Spleen (tissue), 13 donors: ENCODE measurements at regions of chr11 and their contacts with region 1.

Region 1: GRCh38 chr11:65204646-65205601 is 23.2 kb downstream of the CAPN1 start:
- DNase-seq: peak; percentile 82
- H3K4me3 ChIP-seq: no peak overlapping the region
- H3K27ac ChIP-seq: no peak overlapping the region
- H3K4me1 ChIP-seq: peaks cover 0 to 29% (median 14%) of the 10 kb centered on the region in 6 donors
- H3K27me3 ChIP-seq: no peaks in the 10 kb centered on the region
- CTCF ChIP-seq: peak; percentile 71 to 96 (median 89)
- POLR2A ChIP-seq: no peak

Region 2: DNA sequence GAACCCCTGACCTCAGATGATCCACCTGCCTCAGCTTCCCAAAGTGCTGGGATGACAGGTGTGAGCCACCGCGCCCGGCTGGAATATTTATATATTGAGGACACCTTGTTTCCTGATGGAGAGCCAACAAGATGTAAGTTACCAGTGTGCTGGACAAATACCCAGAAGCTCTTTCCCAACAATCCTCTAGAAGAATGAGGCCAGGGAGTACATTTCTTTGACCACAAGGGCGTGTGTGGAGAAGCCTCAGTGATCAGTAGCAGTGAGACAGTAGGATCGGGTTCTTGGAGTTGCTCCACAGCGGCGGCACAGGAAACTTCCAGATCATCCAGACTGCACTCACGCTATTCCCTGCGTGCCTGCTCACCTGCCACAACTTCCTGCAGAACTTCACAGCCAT is 46.6 kb after region 1 on chr11:
- intact Hi-C with region 1: loop called (anchors 5 kb)
- DNase-seq: no peak
- H3K4me3 ChIP-seq: no peak overlapping the region
- H3K27ac ChIP-seq: no peak overlapping the region
- H3K4me1 ChIP-seq: no peaks in the 10 kb centered on the region
- H3K27me3 ChIP-seq: no peaks in the 10 kb centered on the region
- CTCF ChIP-seq: no peak
- POLR2A ChIP-seq: no peak